Sciatic nerve (tissue), 2 donors: ENCODE measurements at regions of chr17 and their contacts with region 1.

Region 1: GRCh38 chr17:7803981-7804380 is 30.0 kb upstream of the KDM6B start:
- DNase-seq: no peak
- ATAC-seq: no peak

Region 2: GRCh38 chr17:8857919-8858318 is 1053.9 kb after region 1 on chr17:
- intact Hi-C with region 1: loop called (anchors 5 kb)
- DNase-seq: peak; percentile 66
- ATAC-seq: peak; percentile 60